ENCODE measurements at regions of chr13 and their contacts with region 1.

Region 1: DNA sequence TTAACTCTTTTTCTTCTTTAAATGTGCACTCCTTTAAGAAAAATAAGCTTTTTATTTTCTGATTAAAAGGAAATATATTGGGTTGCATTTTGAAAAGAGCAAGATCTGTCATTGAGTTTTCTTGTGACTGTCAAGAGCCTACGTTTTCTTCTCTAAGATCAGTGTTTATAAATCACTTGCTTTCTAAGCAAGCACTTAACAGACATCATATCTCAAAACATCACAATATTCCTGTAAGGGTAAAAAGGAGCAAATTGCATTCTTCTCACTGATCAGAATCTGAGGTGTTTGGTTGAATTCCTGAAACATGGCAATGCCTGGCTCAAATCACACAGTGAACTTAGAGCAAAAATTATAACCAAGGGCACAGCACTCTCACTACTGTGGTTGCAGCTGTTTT is 231.3 kb downstream of the PCDH17 start:
- DNase-seq: no peak
- ATAC-seq: no peak
- H3K4me3 ChIP-seq: no peak overlapping the region
- H3K27ac ChIP-seq: no peak overlapping the region
- H3K4me1 ChIP-seq: no peaks in the 10 kb centered on the region
- H3K27me3 ChIP-seq: no peaks in the 10 kb centered on the region
- CTCF ChIP-seq: no peak

Region 2: GRCh38 chr13:57624565-57625435 is 238.1 kb before region 1 on chr13:
- intact Hi-C with region 1: loop called in 1 of 2 experiments (anchors 5 kb)
- DNase-seq: no peak
- ATAC-seq: no peak
- H3K4me3 ChIP-seq: no peak overlapping the region
- H3K27ac ChIP-seq: no peak overlapping the region
- H3K4me1 ChIP-seq: peaks cover 2% of the 10 kb centered on the region
- H3K27me3 ChIP-seq: peaks cover 0 to 23% (median 3%) of the 10 kb centered on the region in 3 donors
- CTCF ChIP-seq: peak; percentile 55